HEK293 (cell line): ENCODE measurements at regions of chr3 and their contacts with region 1.

Region 1: GRCh38 chr3:187150599-187150998 is 11.3 kb upstream of the RPL39L start:
- H3K4me3 ChIP-seq: no peak overlapping the region
- H3K27ac ChIP-seq: no peak overlapping the region
- H3K4me1 ChIP-seq: no peaks in the 10 kb centered on the region
- CTCF ChIP-seq: no peak

Region 2: GRCh38 chr3:186849374-186849975 is 301.1 kb before region 1 on chr3:
- CTCF ChIA-PET with region 1: interaction called, 16 read pairs
- POLR2A ChIA-PET with region 1: no interaction called
- H3K4me3 ChIP-seq: no peak overlapping the region
- H3K27ac ChIP-seq: no peak overlapping the region
- H3K4me1 ChIP-seq: no peaks in the 10 kb centered on the region
- CTCF ChIP-seq: no peak

Region 3: DNA sequence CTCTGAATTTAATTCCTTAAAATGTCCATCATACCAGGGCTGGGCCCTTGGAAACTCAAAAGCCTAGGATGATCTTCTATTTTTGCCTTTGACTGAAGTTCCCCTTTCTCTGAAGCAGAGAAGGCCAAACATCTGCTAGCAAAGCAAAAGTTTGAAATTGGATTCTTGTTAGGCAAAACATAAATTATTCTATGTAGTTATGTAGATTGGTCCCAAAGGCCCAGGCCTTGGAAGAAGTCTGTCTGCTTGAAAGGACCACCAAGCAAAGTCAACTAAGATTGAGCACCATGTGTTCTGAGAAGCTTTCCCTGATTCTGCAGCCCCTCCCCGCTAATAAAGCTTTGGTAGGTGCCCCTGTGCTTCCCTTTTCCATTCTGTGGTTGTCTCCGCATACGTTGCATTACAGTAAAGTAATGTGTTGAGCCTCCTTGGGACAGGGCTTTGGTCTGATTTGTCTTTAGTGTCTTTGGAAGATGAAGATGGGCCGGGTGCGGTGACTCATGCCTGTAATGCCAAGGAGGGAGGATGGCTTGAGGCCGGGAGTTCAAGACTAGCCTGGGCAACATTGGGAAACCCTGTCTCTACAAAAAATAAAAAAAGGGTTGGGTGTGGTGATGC is 67.7 kb before region 1 on chr3:
- CTCF ChIA-PET with region 1: no interaction called
- POLR2A ChIA-PET with region 1: no interaction called
- H3K4me3 ChIP-seq: no peak overlapping the region
- H3K27ac ChIP-seq: no peak overlapping the region
- H3K4me1 ChIP-seq: no peaks in the 10 kb centered on the region
- CTCF ChIP-seq: no peak

Region 4: DNA sequence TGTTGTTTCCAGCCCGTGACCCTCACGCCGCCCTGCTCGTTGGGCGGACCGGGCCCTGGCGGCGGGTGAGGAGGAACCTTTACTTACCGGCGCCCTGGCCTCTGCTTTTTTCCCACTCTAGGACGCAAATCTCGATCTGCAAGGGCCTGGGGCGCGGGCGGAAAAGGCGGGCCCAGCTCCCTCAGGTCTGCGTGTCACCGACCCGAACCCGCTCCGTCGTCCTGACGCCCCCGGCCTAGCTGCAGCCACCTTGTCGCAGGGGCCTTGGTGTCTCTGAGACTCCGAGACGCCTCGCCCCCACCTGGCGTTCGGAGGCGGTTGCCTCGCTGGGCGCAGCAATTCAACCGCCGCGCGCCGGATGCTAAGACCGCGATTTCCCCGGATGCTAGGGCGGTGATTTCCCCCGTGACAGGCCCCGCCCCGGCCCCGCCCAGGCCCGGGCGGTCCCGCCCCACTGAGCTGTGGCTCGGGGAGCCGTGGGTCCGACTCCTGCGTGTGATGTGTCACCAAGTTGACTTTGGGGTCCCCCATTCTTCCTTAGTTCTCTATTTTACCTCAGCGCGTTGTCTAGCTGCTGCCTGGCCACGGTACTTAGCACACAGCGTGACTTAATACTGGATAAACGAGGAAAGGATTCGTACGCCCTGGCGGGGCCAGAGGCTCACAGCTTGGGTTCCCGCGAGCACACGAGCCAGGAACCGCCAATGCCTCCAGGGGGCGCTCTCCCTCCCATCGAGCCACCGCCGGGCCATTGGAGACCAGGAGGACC is 11.3 kb before region 1 on chr3 and contains the start of gene RPL39L:
- CTCF ChIA-PET with region 1: interaction called, 22 read pairs
- POLR2A ChIA-PET with region 1: interaction called, 3 read pairs
- H3K4me3 ChIP-seq: peak within 1 kb of the TSS; percentile 55
- H3K27ac ChIP-seq: peak within 1 kb of the TSS; percentile 22; the same call in 1 of the 2 replicates
- H3K4me1 ChIP-seq: no peaks in the 10 kb centered on the region
- CTCF ChIP-seq: peak; percentile 71